Mammary epithelial cell (primary cell): ENCODE measurements at regions of chr2 and their contacts with region 1.

Region 1: DNA sequence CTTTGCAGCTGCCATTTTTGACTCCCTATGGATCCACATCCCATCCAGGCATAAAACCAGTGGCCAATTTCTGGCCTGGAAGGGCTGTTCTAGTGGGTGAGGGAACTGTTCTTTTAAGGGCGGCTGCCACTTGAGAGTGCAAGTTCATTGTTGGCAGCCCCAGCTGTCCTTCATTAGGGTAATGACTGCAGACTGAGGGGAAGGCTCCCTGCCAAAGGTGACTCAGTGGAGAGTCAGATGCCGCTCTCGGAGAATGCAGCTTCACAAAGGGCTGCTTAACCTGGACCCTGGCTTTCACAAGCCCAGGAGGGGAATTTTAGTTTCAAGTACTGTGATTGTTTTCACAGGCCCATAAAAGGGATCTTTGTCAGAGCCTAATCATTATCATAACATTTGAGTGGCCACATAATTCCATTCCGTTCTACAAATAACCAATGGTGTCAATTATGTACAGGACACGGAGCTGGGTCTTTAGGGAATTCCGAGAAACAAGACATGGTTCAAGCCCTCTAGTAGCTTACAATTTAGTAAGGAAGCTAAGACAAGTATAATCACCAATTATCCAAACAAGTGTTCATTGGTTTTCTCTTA is 235.7 kb downstream of the CDCA7 start:
- DNase-seq: peak; percentile 99
- H3K4me3 ChIP-seq: peak overlapping the region; percentile 15 to 33 (median 28)
- H3K27ac ChIP-seq: peak overlapping the region; percentile 82
- H3K4me1 ChIP-seq: peaks cover 20% of the 10 kb centered on the region
- H3K27me3 ChIP-seq: no peaks in the 10 kb centered on the region
- CTCF ChIP-seq: no peak

Region 2: DNA sequence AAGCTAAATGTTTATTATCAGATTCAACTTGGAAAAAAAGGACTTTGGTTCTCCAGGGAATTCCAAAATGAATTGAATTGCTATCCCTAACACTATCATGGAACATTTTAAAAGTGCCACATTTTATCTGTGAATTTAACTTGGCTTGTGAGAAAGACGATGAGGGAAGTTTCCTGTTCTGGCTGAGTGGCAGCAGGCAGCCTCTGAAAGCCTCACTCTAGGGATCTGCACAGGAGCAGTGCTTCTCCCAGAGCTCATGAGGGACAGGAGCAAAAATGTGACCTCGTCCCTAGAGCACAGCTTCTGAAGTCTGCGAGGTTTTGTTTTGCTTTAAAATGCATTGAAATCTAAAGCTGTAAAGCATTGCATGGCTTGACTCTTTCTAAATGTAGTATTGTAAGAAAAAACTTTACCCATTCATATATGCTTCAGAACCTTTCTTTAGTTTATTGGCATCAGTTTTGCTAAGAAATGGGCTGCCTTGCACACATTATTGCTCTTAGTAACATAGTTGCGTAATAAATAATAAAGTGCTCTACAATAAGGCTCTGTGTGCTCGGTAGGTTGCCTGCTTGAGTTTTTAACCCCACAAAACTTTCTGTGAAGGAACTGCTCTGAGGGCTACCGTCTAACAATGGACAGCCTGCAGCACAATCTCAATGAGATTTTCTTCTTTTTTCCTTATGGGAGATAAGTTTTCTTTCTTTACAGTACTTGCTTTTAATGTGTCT is 371.9 kb before region 1 on chr2:
- CTCF ChIA-PET with region 1: no interaction called
- dilution Hi-C with region 1: no loop called
- in situ Hi-C with region 1: no loop called
- intact Hi-C with region 1: no loop called
- DNase-seq: peak; percentile 40
- H3K4me3 ChIP-seq: no peak overlapping the region
- H3K27ac ChIP-seq: peak overlapping the region; percentile 21
- H3K4me1 ChIP-seq: peaks cover 18% of the 10 kb centered on the region
- H3K27me3 ChIP-seq: no peaks in the 10 kb centered on the region
- CTCF ChIP-seq: no peak

Region 3: DNA sequence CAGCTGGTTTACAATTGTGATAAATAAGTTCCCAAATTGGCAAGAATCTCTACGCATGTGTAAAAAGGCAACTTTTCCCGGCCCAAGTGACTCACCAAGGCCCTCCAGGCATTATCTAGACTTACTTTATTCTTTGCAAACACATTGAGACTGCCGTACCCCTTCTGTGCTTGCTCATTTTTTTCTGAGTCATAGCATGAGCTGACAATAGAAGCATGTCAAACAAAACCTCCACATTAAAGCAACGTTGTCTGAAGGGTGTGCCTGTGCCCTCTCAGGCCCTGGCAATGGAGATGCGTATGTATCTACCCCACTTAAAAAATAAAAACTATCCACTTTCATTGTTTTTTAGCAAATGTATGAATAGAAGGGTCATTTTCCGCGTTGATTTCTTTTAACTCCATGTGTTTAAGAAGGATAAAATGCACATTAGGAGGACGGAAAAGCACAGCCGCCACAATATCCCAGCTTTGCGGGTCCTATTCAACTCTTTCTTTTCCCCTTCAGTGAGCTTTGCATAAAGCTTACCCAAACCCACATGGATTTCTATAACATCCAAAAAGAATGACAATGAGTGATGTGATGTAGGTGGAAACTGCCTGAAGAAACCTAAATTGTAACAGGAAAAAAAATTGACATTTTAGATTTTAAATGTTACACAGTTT is 62.5 kb after region 1 on chr2:
- CTCF ChIA-PET with region 1: no interaction called
- dilution Hi-C with region 1: no loop called
- in situ Hi-C with region 1: no loop called
- intact Hi-C with region 1: loop called (anchors 1 kb)
- DNase-seq: peak; percentile 98
- H3K4me3 ChIP-seq: no peak overlapping the region
- H3K27ac ChIP-seq: peak overlapping the region; percentile 98
- H3K4me1 ChIP-seq: peaks cover 44% of the 10 kb centered on the region
- H3K27me3 ChIP-seq: no peaks in the 10 kb centered on the region
- CTCF ChIP-seq: no peak

Region 4: GRCh38 chr2:173667417-173667816 is 77.1 kb after region 1 on chr2:
- CTCF ChIA-PET with region 1: no interaction called
- dilution Hi-C with region 1: no loop called
- in situ Hi-C with region 1: no loop called
- intact Hi-C with region 1: loop called (anchors 1 kb)
- DNase-seq: peak; percentile 60
- H3K4me3 ChIP-seq: no peak overlapping the region
- H3K27ac ChIP-seq: peak overlapping the region; percentile 58
- H3K4me1 ChIP-seq: peaks cover 20% of the 10 kb centered on the region
- H3K27me3 ChIP-seq: no peaks in the 10 kb centered on the region
- CTCF ChIP-seq: peak; percentile 55 to 70

Region 5: GRCh38 chr2:173749315-173749714 is 158.9 kb after region 1 on chr2:
- CTCF ChIA-PET with region 1: no interaction called
- dilution Hi-C with region 1: no loop called
- in situ Hi-C with region 1: no loop called
- intact Hi-C with region 1: no loop called
- DNase-seq: peak; percentile 6
- H3K4me3 ChIP-seq: no peak overlapping the region
- H3K27ac ChIP-seq: no peak overlapping the region
- H3K4me1 ChIP-seq: no peaks in the 10 kb centered on the region
- H3K27me3 ChIP-seq: no peaks in the 10 kb centered on the region
- CTCF ChIP-seq: peak in 1 of 2 donors; percentile 52